HEK293 (cell line): ENCODE measurements at regions of chr6 and their contacts with region 1.

Region 1: DNA sequence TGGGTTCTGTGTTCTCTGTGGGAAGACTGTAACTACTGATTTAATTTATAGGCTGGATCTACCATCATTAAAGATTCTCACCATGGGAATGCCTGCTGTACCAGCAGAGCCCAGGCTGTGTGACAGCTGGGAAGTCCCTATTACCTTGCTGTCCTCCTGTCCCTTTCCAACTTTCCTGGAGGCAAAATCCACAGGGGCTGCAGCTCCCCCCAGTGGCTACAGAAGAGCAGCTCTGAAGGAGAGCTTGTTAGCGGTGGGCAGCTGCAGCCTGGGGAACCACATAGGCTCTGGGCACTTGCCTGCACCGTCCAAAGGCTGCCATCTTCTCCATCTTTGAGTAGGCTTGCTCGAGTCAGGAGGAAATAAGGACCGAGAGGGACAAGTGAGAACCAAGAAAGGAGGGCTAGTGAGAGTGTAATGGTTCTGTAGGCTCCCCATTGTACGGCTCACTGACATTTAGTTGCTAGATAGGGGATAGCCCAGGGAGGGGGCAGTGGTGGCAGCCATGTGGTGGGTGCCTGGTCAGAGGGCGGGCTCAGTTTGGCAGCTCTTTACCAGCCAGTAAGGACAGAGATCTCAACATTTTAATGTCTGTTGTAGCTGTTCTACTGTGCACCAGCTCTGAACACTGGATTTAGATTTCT is 155.1 kb upstream of the MLIP start:
- H3K4me3 ChIP-seq: no peak overlapping the region
- H3K27ac ChIP-seq: no peak overlapping the region
- H3K4me1 ChIP-seq: no peaks in the 10 kb centered on the region
- CTCF ChIP-seq: peak; percentile 85; the same call in 1 of the 2 replicates

Region 2: DNA sequence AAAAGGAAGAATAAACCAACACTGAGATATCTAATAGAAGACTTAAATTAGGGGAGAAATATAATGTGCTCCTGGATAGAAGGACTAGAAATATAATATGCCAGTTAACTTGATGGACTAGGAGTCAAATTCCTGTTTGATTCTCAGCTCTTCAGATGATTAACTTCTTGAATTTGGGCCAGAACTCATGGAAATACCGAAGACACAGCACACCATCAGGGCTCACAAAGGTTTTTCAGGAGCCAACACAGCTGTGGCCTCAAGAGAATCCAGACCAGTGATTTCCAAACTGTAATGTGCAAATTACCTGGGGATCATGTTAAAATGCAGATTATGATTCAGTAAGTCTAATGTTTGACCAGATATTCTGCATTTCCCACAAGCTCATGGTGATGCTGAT is 195.2 kb before region 1 on chr6:
- CTCF ChIA-PET with region 1: interaction called, 13 read pairs
- POLR2A ChIA-PET with region 1: no interaction called
- H3K4me3 ChIP-seq: no peak overlapping the region
- H3K27ac ChIP-seq: no peak overlapping the region
- H3K4me1 ChIP-seq: no peaks in the 10 kb centered on the region
- CTCF ChIP-seq: no peak

Region 3: GRCh38 chr6:53794720-53795253 is 161.4 kb before region 1 on chr6 and contains the start of gene LRRC1:
- CTCF ChIA-PET with region 1: interaction called, 127 read pairs
- POLR2A ChIA-PET with region 1: interaction called, 41 read pairs
- H3K4me3 ChIP-seq: peak within 1 kb of the TSS; percentile 77
- H3K27ac ChIP-seq: peak within 1 kb of the TSS; percentile 86
- H3K4me1 ChIP-seq: peaks cover 18% of the 10 kb centered on the region
- CTCF ChIP-seq: no peak; the same call in 1 of the 2 replicates

Region 4: GRCh38 chr6:53943395-53943794 is 12.8 kb before region 1 on chr6:
- CTCF ChIA-PET with region 1: interaction called, 22 read pairs
- POLR2A ChIA-PET with region 1: no interaction called
- H3K4me3 ChIP-seq: no peak overlapping the region
- H3K27ac ChIP-seq: no peak overlapping the region
- H3K4me1 ChIP-seq: no peaks in the 10 kb centered on the region
- CTCF ChIP-seq: no peak